Heart left ventricle (tissue), 16 donors: ENCODE measurements at regions of chr17 and their contacts with region 1.

Region 1: GRCh38 chr17:59964482-59965328 is at the start of gene RNFT1:
- DNase-seq: peak; percentile 93 to 96 (median 94)
- ATAC-seq: peak; percentile 96 to 98 (median 98)
- H3K4me3 ChIP-seq: peak within 1 kb of the TSS; percentile 49 to 98 (median 84)
- H3K27ac ChIP-seq: peak within 1 kb of the TSS; percentile 76 to 97 (median 94)
- H3K4me1 ChIP-seq: peaks cover 0 to 23% (median 15%) of the 10 kb centered on the region in 12 donors
- H3K27me3 ChIP-seq: no peaks in the 10 kb centered on the region
- CTCF ChIP-seq: no peak
- POLR2A ChIP-seq: peak in 1 of 2 donors; percentile 79
- total RNA-seq, gene RNFT1: 4.7 to 18.0 (median 8.8) TPM

Region 2: GRCh38 chr17:59668816-59669215 is 295.9 kb before region 1 on chr17:
- intact Hi-C with region 1: no loop called
- DNase-seq: no peak
- ATAC-seq: peak in 3 of 4 donors; percentile 11 to 49 (median 39)
- H3K4me3 ChIP-seq: no peak overlapping the region
- H3K27ac ChIP-seq: peak overlapping the region in 2 of 12 donors; percentile 48 to 72
- H3K4me1 ChIP-seq: peaks cover 0 to 51% (median 5%) of the 10 kb centered on the region in 12 donors
- H3K27me3 ChIP-seq: no peaks in the 10 kb centered on the region
- CTCF ChIP-seq: no peak
- POLR2A ChIP-seq: no peak

Region 3: DNA sequence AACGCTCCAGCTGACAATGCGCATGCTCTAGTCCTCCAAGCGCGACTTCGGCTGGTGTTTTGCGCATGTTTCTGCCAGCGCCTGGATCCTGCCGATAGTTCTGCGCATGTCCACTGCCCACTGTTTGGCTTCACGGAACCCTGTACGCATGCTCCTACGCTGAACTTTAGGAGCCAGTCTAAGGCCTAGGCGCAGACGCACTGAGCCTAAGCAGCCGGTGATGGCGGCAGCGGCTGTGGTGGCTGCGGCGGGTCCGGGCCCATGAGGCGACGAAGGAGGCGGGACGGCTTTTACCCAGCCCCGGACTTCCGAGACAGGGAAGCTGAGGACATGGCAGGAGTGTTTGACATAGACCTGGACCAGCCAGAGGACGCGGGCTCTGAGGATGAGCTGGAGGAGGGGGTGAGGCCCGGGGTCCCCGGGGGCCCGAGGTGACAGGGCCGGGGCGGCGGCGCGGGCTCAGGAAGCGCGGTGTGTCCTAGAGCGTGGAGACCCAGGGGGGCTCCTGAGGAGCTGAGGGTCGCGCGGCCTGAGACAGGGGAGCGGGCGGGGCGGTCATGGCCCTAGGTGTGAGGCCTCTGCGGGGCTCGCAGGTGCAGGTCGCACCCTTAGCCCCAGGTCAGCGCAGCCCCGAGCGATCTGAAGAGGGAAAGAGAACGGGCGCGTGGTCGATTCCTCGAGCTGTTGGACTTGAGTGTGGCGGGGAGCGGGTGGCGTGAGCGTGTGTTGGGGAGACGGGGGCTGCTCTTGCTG is 71.6 kb before region 1 on chr17 and contains the starts of genes RPS6KB1 and TUBD1:
- intact Hi-C with region 1: loop called in 2 of 10 experiments (anchors 2 to 10 kb)
- DNase-seq: peak; percentile 97 to 98 (median 97)
- ATAC-seq: peak; percentile 99 to 100 (median 99)
- H3K4me3 ChIP-seq: peak within 1 kb of the TSS; percentile 67 to 100 (median 91)
- H3K27ac ChIP-seq: peak within 1 kb of the TSS; percentile 77 to 95 (median 88)
- H3K4me1 ChIP-seq: peaks cover 0 to 36% (median 20%) of the 10 kb centered on the region in 12 donors
- H3K27me3 ChIP-seq: no peaks in the 10 kb centered on the region
- CTCF ChIP-seq: no peak
- POLR2A ChIP-seq: peak in 1 of 2 donors; percentile 84
- total RNA-seq, gene RPS6KB1: 13.5 to 29.4 (median 24.5) TPM
- total RNA-seq, gene TUBD1: 3.7 to 8.5 (median 6.2) TPM

Region 4: DNA sequence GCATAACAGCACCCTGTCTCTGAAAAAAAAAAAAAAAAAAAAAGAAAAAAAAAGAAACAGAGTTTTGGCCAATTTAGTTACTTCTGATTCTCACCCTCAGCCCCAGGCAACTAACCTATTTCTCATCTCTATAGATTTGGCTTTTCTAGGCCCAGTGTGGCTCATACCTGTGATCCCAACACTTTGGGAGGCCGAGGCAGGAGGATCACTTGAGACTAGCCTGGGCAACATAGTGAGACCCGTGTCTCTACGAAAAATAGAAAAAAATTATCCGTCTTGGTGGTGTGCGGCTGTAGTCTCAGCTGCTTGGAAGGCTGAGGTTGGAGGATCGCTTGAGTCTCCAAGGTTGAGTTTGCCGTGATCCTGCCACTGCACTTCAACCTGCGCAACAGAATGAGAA is 63.1 kb before region 1 on chr17:
- intact Hi-C with region 1: loop called in 2 of 10 experiments (anchors 10 kb)
- DNase-seq: no peak
- ATAC-seq: no peak
- H3K4me3 ChIP-seq: no peak overlapping the region
- H3K27ac ChIP-seq: no peak overlapping the region
- H3K4me1 ChIP-seq: peaks cover 0 to 15% (median 1%) of the 10 kb centered on the region in 12 donors
- H3K27me3 ChIP-seq: no peaks in the 10 kb centered on the region
- CTCF ChIP-seq: no peak
- POLR2A ChIP-seq: no peak

Region 5: DNA sequence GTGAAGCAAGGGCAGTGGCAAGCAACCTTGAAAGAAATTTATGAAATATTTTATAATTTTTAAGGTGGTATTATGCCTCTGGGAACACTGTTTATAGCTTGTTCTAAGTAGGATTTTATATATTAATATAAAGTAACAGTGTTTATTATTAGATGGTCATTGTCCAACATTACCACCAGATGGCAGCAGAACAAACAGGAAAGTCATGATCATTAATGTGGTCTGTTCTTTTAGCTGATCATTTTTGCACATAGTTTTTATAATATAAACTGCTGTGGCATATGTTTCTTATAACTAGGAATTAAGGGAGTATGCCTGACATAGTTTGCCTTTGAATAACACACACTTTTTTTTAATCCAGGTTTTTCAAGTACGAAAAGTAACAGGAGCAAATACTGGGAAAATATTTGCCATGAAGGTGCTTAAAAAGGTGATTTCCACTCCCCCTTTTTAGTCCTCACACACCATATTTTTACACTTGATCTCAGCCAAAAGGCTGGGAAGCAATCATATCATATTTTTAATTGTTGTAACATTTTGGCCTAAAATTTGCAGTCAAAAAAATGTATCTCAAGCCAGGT is 50.3 kb before region 1 on chr17:
- intact Hi-C with region 1: loop called in 2 of 10 experiments (anchors 10 kb)
- DNase-seq: no peak
- ATAC-seq: peak in 1 of 4 donors; percentile 46
- H3K4me3 ChIP-seq: no peak overlapping the region
- H3K27ac ChIP-seq: no peak overlapping the region
- H3K4me1 ChIP-seq: no peaks in the 10 kb centered on the region
- H3K27me3 ChIP-seq: no peaks in the 10 kb centered on the region
- CTCF ChIP-seq: peak; percentile 48 to 75 (median 68)
- POLR2A ChIP-seq: no peak

Region 6: GRCh38 chr17:60036796-60037612 is 72.3 kb after region 1 on chr17:
- intact Hi-C with region 1: loop called in 2 of 10 experiments (anchors 5 kb)
- DNase-seq: peak; percentile 24 to 80 (median 66)
- ATAC-seq: peak; percentile 66 to 93 (median 86)
- H3K4me3 ChIP-seq: peak overlapping the region in 1 of 12 donors; percentile 2
- H3K27ac ChIP-seq: no peak overlapping the region
- H3K4me1 ChIP-seq: peaks cover 0 to 6% (median 0%) of the 10 kb centered on the region in 12 donors
- H3K27me3 ChIP-seq: peaks cover 0 to 19% (median 4%) of the 10 kb centered on the region in 9 donors
- CTCF ChIP-seq: peak; percentile 74 to 93 (median 88)
- POLR2A ChIP-seq: no peak